ENCODE measurements at regions of chr4 and their contacts with region 1.

Region 1: DNA sequence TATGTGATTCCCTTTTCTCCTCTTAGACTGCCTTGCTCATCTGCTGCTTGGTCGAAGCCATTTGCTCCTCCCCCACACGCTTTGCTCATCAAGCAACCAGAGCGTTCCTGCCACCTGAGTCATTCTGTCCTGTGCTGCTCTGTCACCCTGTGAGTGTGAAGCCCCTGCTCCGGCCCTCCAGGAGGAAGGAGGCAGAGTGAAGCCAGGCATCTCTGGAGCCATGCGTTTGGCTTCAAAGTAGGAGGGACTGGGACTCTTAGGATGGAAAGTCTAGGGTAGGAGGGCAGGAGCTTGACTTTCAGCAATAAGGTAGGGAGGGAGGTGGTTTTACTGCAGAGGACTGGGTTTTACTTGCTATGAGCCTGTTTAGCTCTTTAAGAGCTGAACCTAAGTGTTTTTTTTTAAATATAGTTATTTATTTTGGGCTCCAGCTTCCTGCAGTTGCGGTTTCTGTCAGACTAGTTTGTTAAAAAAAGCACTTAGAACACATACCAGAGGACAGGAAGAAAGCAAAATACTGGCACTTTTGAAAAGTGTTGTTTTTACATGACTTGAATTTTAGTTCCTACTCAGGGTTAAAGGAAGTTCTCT is 63.6 kb downstream of the SPINK2 start:
- DNase-seq: peak; percentile 98
- ATAC-seq: peak; percentile 89
- H3K4me3 ChIP-seq: peak overlapping the region; percentile 43
- H3K27ac ChIP-seq: peak overlapping the region; percentile 74
- H3K4me1 ChIP-seq: peaks cover 39% of the 10 kb centered on the region
- H3K27me3 ChIP-seq: no peaks in the 10 kb centered on the region
- CTCF ChIP-seq: no peak

Region 2: GRCh38 chr4:56698329-56698728 is 59.6 kb before region 1 on chr4:
- CTCF ChIA-PET with region 1: no interaction called
- POLR2A ChIA-PET with region 1: interaction called, 4 read pairs
- intact Hi-C with region 1: loop called (anchors 5 kb)
- DNase-seq: no peak
- ATAC-seq: no peak
- H3K4me3 ChIP-seq: no peak overlapping the region
- H3K27ac ChIP-seq: no peak overlapping the region
- H3K4me1 ChIP-seq: peaks cover 5% of the 10 kb centered on the region
- H3K27me3 ChIP-seq: no peaks in the 10 kb centered on the region
- CTCF ChIP-seq: no peak

Region 3: DNA sequence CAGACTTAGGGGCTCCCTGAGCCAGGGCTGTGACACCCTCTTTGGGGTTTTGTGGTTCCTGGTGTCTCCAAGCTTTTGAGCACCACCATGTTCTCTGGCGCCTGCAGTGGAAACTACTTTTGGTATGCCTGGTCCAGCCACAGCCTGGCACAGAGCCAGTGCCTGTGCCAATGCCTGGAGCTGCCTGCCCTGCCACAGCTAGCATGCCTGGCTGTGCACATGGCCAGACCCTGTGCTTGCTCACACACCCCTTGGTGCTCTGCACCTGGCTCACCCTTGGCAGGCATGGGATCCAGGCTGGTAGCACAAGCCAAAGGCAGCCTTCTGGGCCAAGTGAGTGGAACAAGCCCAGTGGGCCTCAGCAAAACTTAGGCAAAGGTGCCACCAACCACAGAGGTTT is 45.9 kb before region 1 on chr4:
- CTCF ChIA-PET with region 1: no interaction called
- POLR2A ChIA-PET with region 1: no interaction called
- intact Hi-C with region 1: no loop called
- DNase-seq: no peak
- ATAC-seq: no peak
- H3K4me3 ChIP-seq: no peak overlapping the region
- H3K27ac ChIP-seq: no peak overlapping the region
- H3K4me1 ChIP-seq: no peaks in the 10 kb centered on the region
- H3K27me3 ChIP-seq: no peaks in the 10 kb centered on the region
- CTCF ChIP-seq: no peak

Region 4: GRCh38 chr4:56742080-56742871 is 15.6 kb before region 1 on chr4:
- CTCF ChIA-PET with region 1: no interaction called
- POLR2A ChIA-PET with region 1: no interaction called
- intact Hi-C with region 1: loop called (anchors 2 kb)
- DNase-seq: peak; percentile 66
- ATAC-seq: peak; percentile 65
- H3K4me3 ChIP-seq: no peak overlapping the region
- H3K27ac ChIP-seq: peak overlapping the region; percentile 5; the same call in 1 of the 2 replicates
- H3K4me1 ChIP-seq: peaks cover 21% of the 10 kb centered on the region
- H3K27me3 ChIP-seq: no peaks in the 10 kb centered on the region
- CTCF ChIP-seq: no peak

Region 5: GRCh38 chr4:56790691-56791091 is 32.8 kb after region 1 on chr4:
- CTCF ChIA-PET with region 1: no interaction called
- POLR2A ChIA-PET with region 1: no interaction called
- intact Hi-C with region 1: no loop called
- DNase-seq: no peak
- ATAC-seq: no peak
- H3K4me3 ChIP-seq: no peak overlapping the region
- H3K27ac ChIP-seq: no peak overlapping the region
- H3K4me1 ChIP-seq: peaks cover 4% of the 10 kb centered on the region; the same call in 1 of the 2 replicates
- H3K27me3 ChIP-seq: no peaks in the 10 kb centered on the region
- CTCF ChIP-seq: no peak

Region 6: DNA sequence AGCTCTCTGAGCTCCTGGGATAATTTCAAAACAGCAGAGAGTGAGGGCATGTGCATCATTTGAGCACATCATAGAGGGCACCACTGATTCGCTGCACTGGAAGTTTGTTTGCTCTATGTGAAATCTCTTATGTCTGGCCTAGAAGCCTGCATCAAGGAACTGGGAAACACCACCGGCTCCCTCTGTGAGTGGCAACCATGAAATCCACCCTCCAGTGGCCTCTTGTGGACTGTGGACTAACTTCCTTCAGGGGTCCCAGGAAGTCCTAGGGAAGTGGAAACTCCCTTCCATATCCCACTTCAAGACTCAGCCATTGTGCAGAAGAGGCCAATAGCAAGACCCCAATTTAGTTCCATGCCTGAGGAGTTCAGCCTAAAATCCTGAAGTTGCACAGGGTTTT is 400.3 kb after region 1 on chr4:
- CTCF ChIA-PET with region 1: no interaction called
- POLR2A ChIA-PET with region 1: no interaction called
- intact Hi-C with region 1: no loop called
- DNase-seq: no peak
- ATAC-seq: peak; percentile 35; the same call in 1 of the 2 replicates
- H3K4me3 ChIP-seq: no peak overlapping the region
- H3K27ac ChIP-seq: no peak overlapping the region
- H3K4me1 ChIP-seq: peaks cover 11% of the 10 kb centered on the region
- H3K27me3 ChIP-seq: peaks cover 7% of the 10 kb centered on the region; the same call in 1 of the 2 replicates
- CTCF ChIP-seq: peak; percentile 34; the same call in 1 of the 2 replicates